Activated CD4-positive, alpha-beta T cell treated with anti-CD3 and anti-CD28 coated beads, Interleukin-2, amount 10 ng/mL, durations not matched to agents 24 days and 14 days (primary cell): ENCODE measurements at regions of chr10 and their contacts with region 1.

Region 1: DNA sequence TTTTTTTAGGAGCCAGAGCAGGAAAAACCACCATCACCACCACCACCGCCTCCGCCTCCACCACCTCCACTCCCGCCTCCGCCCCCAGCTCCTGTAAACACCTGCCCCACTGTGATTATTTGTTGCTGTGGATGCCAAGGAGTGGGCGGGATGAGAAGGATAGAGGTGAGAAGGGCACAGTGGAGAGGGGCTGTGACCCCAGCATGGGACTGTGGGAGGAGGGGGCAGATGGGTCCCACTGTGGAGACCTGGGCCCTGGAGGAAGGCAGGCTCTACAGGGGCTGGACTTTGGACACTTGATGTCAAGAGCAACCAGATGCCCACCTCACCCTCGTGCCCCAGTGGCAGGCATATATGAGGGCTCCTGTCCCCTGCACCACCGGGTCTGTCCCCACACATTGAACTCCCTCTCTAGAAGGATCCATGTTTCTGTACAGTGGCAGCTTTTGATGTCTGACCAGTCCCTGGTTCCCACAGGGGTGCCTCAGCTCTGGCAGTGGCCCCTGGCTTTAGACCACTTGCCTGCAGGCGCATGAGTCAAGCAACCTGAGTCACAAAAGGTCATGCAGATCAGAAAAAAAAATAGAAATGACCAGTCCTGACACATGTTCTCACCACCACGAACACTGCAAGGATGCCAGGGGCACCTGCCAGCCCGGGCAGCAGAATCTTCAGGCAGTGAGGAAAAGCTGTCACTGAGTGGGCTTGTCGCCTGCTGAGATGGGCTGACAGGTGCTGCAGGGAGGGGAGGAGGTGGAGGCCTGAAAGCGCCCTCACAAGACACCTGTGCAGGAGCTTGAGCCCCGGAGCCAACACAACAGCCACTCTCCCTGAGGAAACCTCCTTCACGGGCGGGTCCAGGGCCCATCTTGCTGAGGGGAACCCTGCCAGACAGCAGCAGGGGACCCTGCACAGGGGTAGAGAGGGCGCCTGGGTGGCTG is 25.0 kb downstream of the ANTXRL start:
- DNase-seq: no peak
- H3K4me3 Mint-ChIP-seq: no peak overlapping the region
- H3K27ac Mint-ChIP-seq: no peak overlapping the region
- H3K4me1 Mint-ChIP-seq: peaks cover 2% of the 10 kb centered on the region
- H3K27me3 Mint-ChIP-seq: no peaks in the 10 kb centered on the region

Region 2: DNA sequence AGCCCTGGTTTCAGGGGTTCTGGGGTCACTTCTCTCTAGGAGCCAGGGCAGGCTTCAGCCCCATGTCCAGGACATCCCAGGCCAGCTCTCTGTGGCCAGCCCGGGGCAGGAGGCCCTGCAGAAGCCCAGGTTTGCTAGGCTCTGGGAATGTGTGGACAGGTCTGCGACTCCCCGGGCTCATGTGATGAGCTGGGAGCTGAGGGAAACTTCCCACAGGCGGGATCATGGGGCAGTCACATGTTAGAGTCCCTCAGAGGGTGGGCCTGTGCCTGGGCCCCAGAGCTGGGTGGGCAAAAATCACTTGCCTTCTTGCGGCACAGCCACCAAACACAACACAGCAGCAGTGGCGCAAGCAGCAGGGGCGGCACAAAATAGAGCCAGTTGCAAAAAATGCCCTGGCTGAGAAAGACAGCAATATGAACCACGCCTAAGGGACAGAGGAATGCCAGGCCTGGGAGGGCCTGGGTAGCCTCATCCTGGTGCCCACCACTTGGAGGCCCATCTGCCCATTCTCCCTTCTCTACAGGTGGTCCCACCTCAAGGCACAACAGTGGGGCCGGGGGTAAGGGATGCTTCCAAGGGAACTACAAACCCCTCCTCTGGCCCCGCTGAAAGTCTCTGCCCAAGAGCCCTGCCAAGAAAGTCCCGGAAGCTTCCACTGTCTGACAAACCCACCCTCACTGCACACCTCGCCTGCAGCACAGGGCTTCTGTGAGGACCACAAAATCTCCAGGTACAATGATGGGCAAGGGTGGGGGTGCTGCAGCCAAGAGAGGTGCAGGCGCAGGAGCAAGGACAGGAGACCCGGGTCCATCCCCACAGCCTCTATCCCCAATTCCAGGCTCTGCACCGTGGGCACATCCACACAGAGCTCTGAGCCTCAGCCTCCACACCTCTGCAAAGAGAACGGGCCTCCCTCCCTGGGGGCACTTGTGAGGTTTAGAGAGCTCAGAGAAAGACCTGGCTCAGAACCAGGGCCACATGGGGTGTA is 59.6 kb before region 1 on chr10:
- intact Hi-C with region 1: loop called (anchors 2 kb)
- DNase-seq: no peak
- H3K4me3 Mint-ChIP-seq: no peak overlapping the region
- H3K27ac Mint-ChIP-seq: no peak overlapping the region
- H3K4me1 Mint-ChIP-seq: peaks cover 2% of the 10 kb centered on the region
- H3K27me3 Mint-ChIP-seq: no peaks in the 10 kb centered on the region

Region 3: GRCh38 chr10:46328853-46329689 is 17.3 kb after region 1 on chr10:
- intact Hi-C with region 1: no loop called
- DNase-seq: peak; percentile 44
- H3K4me3 Mint-ChIP-seq: no peak overlapping the region
- H3K27ac Mint-ChIP-seq: no peak overlapping the region
- H3K4me1 Mint-ChIP-seq: peaks cover 2% of the 10 kb centered on the region
- H3K27me3 Mint-ChIP-seq: peaks cover 20% of the 10 kb centered on the region

Region 4: GRCh38 chr10:48306265-48306869 is 1994.6 kb after region 1 on chr10 and contains the start of gene MAPK8:
- intact Hi-C with region 1: no loop called
- DNase-seq: peak; percentile 97
- H3K4me3 Mint-ChIP-seq: peak within 1 kb of the TSS; percentile 82
- H3K27ac Mint-ChIP-seq: peak within 1 kb of the TSS; percentile 83
- H3K4me1 Mint-ChIP-seq: peaks cover 24% of the 10 kb centered on the region
- H3K27me3 Mint-ChIP-seq: peaks cover 2% of the 10 kb centered on the region
- total RNA-seq, gene MAPK8: 46.2 and 46.4 TPM in 2 replicates